PC-9 (cell line): ENCODE measurements at regions of chr3 and their contacts with region 1.

Region 1: GRCh38 chr3:114528517-114528916 is 234.7 kb downstream of the TIGIT start:
- DNase-seq: no peak
- H3K4me3 ChIP-seq: no peak overlapping the region
- H3K27ac ChIP-seq: no peak overlapping the region
- H3K4me1 ChIP-seq: no peaks in the 10 kb centered on the region
- H3K27me3 ChIP-seq: no peaks in the 10 kb centered on the region
- CTCF ChIP-seq: no peak

Region 2: DNA sequence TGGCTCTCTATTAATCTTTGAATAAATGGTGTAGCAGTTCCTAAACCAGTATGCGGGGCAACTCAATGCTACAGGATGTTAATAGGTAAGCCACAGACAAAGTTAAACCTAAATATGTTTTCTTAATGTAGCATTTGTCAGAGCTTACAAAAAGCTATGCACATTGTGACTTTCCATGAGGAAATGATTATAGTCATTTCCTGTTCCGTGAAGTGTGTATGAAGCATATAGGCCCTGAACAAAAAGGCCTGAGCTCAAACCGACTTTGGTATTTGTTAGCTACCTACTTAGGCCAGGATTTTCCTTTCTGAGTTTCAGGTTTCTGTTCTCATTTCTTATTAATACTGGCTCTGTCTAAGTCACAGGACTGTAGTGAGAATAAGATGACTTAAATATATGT is 305.4 kb before region 1 on chr3:
- CTCF ChIA-PET with region 1: no interaction called
- POLR2A ChIA-PET with region 1: no interaction called
- intact Hi-C with region 1: no loop called
- DNase-seq: no peak
- H3K4me3 ChIP-seq: no peak overlapping the region
- H3K27ac ChIP-seq: no peak overlapping the region
- H3K4me1 ChIP-seq: no peaks in the 10 kb centered on the region
- H3K27me3 ChIP-seq: peaks cover 4% of the 10 kb centered on the region; the same call in 1 of the 2 replicates
- CTCF ChIP-seq: no peak

Region 3: GRCh38 chr3:114442246-114442645 is 86.3 kb before region 1 on chr3:
- CTCF ChIA-PET with region 1: interaction called, 11 read pairs
- POLR2A ChIA-PET with region 1: no interaction called
- intact Hi-C with region 1: no loop called
- DNase-seq: peak in 1 of 2 experiments; percentile 3
- H3K4me3 ChIP-seq: no peak overlapping the region
- H3K27ac ChIP-seq: no peak overlapping the region
- H3K4me1 ChIP-seq: 0 out of 2 replicates have a peak, but pooled peaks cover 6% of the 10 kb centered on the region
- H3K27me3 ChIP-seq: no peaks in the 10 kb centered on the region
- CTCF ChIP-seq: no peak

Region 4: GRCh38 chr3:114775395-114775794 is 246.9 kb after region 1 on chr3:
- CTCF ChIA-PET with region 1: no interaction called
- POLR2A ChIA-PET with region 1: no interaction called
- intact Hi-C with region 1: no loop called
- DNase-seq: no peak
- H3K4me3 ChIP-seq: no peak overlapping the region
- H3K27ac ChIP-seq: no peak overlapping the region
- H3K4me1 ChIP-seq: no peaks in the 10 kb centered on the region
- H3K27me3 ChIP-seq: no peaks in the 10 kb centered on the region
- CTCF ChIP-seq: no peak